ENCODE measurements at regions of chr10 and their contacts with region 1.

Region 1: DNA sequence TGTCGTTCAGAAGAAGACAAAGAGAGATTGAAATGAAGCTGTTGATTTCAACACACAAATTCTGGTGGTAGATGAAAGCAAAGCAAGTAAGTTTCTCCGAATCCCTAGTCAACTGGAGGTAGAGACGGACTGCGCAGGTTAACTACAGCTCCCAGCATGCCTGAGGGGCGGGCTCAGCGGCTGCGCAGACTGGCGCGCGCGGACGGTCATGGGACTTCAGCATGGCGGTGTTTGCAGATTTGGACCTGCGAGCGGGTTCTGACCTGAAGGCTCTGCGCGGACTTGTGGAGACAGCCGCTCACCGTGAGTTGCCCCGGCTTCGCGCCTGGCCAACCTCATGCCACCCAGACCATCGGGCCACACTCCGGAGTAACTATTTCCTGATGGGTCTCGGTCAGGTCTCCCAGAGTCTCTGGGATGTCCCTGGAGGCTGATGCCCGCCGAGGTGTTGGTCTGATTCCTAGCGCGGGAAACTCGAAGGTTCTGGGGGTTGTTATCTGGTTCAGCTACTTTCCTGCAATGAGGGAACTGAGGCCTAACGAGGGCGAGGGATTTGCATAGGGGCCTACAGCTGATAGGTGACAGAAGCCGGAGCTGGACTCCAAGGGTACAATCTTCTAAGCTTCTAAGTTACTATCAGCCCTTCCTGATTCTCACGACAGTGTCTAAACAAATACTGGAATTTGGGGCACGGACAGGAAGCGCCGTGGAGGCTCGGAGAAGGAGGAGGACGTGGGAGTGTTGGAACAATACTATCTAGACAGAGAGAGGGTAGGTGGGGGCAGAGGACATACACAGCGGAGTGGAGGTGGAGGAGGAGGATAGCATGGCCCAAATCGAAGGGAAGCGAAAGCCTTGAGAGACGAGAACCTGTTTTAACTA is at the start of gene RPP30:
- DNase-seq: peak; percentile 77
- ATAC-seq: peak; percentile 97
- H3K4me3 Mint-ChIP-seq: peak within 1 kb of the TSS; percentile 96
- H3K27ac Mint-ChIP-seq: peak within 1 kb of the TSS; percentile 89
- H3K4me1 Mint-ChIP-seq: peaks cover 30% of the 10 kb centered on the region
- H3K27me3 Mint-ChIP-seq: peaks cover 14% of the 10 kb centered on the region
- CTCF ChIP-seq: no peak
- total RNA-seq, gene RPP30: 43.7 and 44.6 TPM in 2 replicates

Region 2: GRCh38 chr10:89643431-89644331 is 1228.3 kb before region 1 on chr10:
- CTCF ChIA-PET with region 1: no interaction called
- POLR2A ChIA-PET with region 1: interaction called, 3 read pairs
- intact Hi-C with region 1: loop called (anchors 2 kb)
- DNase-seq: peak; percentile 46
- ATAC-seq: peak; percentile 91
- H3K4me3 Mint-ChIP-seq: no peak overlapping the region
- H3K27ac Mint-ChIP-seq: no peak overlapping the region
- H3K4me1 Mint-ChIP-seq: peaks cover 13% of the 10 kb centered on the region
- H3K27me3 Mint-ChIP-seq: no peaks in the 10 kb centered on the region
- CTCF ChIP-seq: no peak

Region 3: DNA sequence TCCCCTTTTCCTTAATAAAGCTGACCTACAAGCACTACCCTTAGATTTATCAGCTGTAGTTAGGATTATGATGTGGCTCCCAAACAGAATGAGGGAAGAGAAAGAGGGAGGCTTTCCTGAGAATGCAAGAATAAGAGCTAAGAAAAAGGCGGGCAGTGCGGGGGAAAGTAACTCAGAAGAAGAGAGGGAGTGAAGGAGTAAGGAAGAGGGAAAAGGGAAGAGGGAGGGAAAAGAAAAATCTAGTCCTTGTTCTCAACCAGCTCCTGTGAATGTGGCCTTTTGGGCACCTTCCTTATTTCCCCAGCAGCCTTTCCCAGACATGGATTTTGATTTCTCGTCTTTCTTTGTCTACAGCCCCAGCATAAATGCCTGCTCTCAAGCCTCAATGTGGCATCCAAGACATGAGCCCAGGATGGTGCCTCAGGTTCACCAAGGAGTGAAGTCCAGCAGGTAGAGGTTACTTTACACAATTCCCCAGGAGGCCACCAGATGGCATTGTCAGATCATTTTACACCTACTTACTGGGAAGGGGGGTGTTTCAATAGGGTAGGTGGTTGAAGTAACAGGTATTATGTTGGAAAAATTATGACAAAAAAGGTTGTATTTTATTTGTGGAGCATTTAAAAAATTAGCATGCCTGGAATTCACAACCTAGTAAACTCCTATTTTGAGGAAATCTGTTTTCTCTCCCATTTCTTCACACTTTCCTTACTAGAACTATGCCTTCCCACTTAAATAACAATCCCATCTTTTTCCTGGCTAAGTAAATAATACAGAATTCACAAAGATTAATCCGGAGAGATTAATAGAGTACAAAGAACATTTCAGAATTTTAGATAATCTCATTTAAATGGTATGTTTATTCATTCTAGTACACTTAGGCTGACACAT is 120.7 kb before region 1 on chr10:
- CTCF ChIA-PET with region 1: interaction called, 3 read pairs
- POLR2A ChIA-PET with region 1: no interaction called
- intact Hi-C with region 1: loop called (anchors 1 kb)
- DNase-seq: no peak
- ATAC-seq: peak; percentile 54
- H3K4me3 Mint-ChIP-seq: no peak overlapping the region
- H3K27ac Mint-ChIP-seq: no peak overlapping the region
- H3K4me1 Mint-ChIP-seq: peaks cover 5% of the 10 kb centered on the region
- H3K27me3 Mint-ChIP-seq: peaks cover 13% of the 10 kb centered on the region
- CTCF ChIP-seq: no peak

Region 4: DNA sequence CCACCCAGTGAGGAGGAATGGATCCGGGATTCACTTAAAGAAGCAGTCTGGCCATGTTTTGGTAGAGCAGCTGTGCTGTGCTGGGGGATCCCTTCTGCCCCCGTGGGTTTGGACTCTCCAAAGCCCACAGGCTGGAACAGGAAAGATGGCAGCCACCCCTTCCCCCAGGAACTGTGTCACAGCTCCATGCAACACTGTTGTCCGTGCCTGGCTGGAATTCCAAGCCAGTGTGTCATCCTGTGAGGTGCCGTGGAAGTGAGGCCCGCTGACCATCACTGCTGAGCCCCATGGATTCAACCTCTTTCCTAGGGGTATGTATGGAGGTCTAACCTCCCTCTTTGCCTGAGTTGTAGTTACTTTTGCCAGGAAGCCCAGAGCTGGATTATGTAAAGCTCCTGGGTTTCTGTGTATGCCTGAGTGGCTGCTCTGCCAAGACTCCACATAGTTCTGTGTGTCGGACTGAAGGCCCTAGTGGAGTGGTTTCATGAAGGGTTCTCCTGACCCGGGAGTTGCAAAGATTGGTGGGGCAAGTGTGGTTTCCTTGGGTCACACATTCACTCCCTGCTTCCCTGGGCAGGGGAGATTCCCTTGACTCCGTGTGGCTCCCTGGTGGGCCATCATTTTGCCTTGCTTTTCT is 313.4 kb after region 1 on chr10:
- CTCF ChIA-PET with region 1: no interaction called
- POLR2A ChIA-PET with region 1: no interaction called
- intact Hi-C with region 1: no loop called
- DNase-seq: no peak
- ATAC-seq: no peak
- H3K4me3 Mint-ChIP-seq: no peak overlapping the region
- H3K27ac Mint-ChIP-seq: no peak overlapping the region
- H3K4me1 Mint-ChIP-seq: peaks cover 80% of the 10 kb centered on the region
- H3K27me3 Mint-ChIP-seq: no peaks in the 10 kb centered on the region
- CTCF ChIP-seq: no peak

Region 5: DNA sequence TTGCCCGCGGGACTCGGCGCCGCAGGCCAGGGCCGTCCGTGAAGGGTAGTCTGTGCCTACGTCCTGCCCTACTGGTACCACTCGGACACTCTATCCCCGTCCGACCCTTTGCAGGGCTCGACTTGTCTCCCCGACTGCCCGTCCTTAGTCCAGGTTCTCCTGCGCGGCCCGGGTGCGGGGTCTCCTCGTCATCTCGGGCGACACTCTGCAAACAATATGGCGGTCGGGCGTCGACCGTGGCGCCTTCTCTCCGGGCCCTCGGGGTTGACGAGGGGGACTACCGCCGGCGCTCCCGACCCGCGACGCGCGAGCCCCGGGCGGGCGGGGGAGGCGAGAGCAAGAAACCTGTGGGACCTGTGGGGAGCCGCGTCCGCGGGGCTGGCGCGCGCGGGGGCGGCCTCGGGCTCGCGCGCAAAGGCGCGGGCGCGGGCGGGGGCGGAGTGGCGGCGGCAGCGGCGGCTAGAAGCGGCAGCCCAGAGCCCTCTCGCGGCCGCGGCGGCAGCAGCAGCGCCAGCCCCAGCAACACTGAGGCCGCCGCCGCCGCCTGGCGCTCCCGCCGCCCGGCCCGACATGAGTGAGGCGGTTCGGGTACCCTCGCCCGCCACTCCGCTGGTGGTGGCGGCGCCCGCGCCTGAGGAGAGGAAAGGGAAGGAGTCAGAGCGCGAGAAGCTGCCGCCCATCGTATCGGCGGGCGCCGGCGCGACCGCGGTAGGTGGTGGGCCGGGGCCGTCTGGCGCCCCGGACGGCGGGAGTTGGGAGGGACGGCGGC is 538.0 kb after region 1 on chr10 and contains the start of gene HECTD2:
- CTCF ChIA-PET with region 1: no interaction called
- POLR2A ChIA-PET with region 1: no interaction called
- intact Hi-C with region 1: loop called (anchors 2 kb)
- DNase-seq: peak; percentile 84
- ATAC-seq: peak; percentile 82
- H3K4me3 Mint-ChIP-seq: peak within 1 kb of the TSS; percentile 89
- H3K27ac Mint-ChIP-seq: peak within 1 kb of the TSS; percentile 90
- H3K4me1 Mint-ChIP-seq: peaks cover 13% of the 10 kb centered on the region
- H3K27me3 Mint-ChIP-seq: no peaks in the 10 kb centered on the region
- CTCF ChIP-seq: no peak
- total RNA-seq, gene HECTD2: 8.1 and 8.6 TPM in 2 replicates